Endothelial cell of umbilical vein (primary cell): ENCODE measurements at regions of chr20 and their contacts with region 1.

Region 1: GRCh38 chr20:1392823-1393506 is at the start of gene FKBP1A:
- DNase-seq: peak; percentile 90
- H3K4me3 ChIP-seq: peak within 1 kb of the TSS; percentile 82 to 86 (median 83)
- H3K27ac ChIP-seq: peak within 1 kb of the TSS; percentile 90
- H3K4me1 ChIP-seq: peaks cover 70% of the 10 kb centered on the region
- H3K27me3 ChIP-seq: no peaks in the 10 kb centered on the region
- CTCF ChIP-seq: peak in 1 of 2 donors; percentile 8
- POLR2A ChIP-seq: peak; percentile 92
- total RNA-seq, gene FKBP1A: 968 and 982 TPM in 2 replicates

Region 2: DNA sequence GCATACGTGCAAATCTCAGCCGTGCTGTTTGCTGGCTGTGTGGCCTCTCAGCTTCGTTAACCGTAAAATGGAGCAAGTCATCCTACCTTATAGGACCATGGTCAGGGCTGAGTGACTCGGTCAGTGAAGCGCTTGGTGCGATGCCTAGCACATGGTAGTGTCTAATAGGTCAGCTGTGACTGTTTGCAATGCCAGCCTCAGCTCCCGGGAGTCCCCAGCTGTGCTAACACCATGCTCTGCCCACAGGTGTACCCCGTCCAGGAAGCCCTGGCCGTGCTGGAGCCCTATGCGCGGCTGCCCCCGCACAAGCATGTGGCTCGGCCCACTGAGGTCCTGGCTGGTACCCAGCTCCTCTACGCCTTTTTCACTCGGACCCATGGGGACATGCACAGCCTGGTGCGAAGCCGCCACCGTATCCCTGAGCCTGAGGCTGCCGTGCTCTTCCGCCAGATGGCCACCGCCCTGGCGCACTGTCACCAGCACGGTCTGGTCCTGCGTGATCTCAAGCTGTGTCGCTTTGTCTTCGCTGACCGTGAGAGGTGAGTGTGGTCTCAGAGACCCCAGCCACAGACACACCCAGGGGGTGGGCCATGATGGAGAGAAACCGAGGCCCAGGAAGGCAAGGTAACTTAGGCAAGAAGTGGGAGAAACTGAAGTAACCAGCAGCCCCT is 1001.8 kb before region 1 on chr20:
- CTCF ChIA-PET with region 1: no interaction called
- POLR2A ChIA-PET with region 1: no interaction called
- dilution Hi-C with region 1: no loop called
- intact Hi-C with region 1: no loop called
- DNase-seq: no peak
- H3K4me3 ChIP-seq: no peak overlapping the region
- H3K27ac ChIP-seq: no peak overlapping the region
- H3K4me1 ChIP-seq: no peaks in the 10 kb centered on the region
- H3K27me3 ChIP-seq: no peaks in the 10 kb centered on the region
- CTCF ChIP-seq: no peak
- POLR2A ChIP-seq: no peak

Region 3: DNA sequence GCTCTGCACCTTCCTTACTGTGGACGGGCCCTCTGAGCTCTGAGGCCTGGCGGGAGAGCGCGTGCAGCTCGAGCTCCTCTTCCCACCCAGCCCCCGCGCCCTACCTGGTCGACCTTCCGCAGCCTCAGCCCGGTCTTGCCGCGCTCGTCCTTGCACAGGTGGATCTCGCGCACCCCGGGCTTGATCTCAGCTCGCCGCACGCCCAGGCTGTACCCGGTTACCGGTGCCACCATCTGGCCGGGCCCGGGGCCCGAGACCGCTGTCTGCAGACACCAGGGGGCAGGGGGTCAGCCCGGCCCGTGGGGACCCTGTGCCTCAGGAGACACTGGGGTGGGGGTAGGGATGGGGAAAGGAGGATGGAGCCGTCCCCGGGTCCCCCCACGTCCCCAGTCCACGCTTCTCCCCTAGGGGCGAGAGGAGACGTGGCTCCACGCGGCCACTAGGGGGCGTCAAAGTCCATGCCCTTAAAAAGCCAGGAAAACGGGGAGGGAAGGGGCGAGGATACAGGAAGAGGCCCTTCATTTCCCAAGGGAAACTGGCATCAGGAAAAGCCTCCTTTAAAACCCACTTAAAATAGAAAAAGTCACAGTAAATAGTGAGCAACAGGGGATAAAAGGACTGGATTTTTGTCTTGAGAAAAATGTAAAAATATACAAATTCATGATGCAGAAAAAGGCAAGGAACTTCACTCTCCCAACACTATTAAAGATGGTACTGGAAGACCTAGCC is 79.6 kb before region 1 on chr20:
- CTCF ChIA-PET with region 1: interaction called, 18 read pairs
- POLR2A ChIA-PET with region 1: no interaction called
- dilution Hi-C with region 1: no loop called
- intact Hi-C with region 1: loop called (anchors 1 kb)
- DNase-seq: peak; percentile 78
- H3K4me3 ChIP-seq: peak overlapping the region in 1 of 3 experiments; percentile 8
- H3K27ac ChIP-seq: peak overlapping the region; percentile 61
- H3K4me1 ChIP-seq: peaks cover 9% of the 10 kb centered on the region
- H3K27me3 ChIP-seq: no peaks in the 10 kb centered on the region
- CTCF ChIP-seq: peak; percentile 89 to 95
- POLR2A ChIP-seq: no peak

Region 4: GRCh38 chr20:1336699-1337367 is 56.1 kb before region 1 on chr20:
- CTCF ChIA-PET with region 1: interaction called, 4 read pairs
- POLR2A ChIA-PET with region 1: interaction called, 4 read pairs
- dilution Hi-C with region 1: no loop called
- intact Hi-C with region 1: loop called (anchors 1 kb)
- DNase-seq: peak; percentile 97
- H3K4me3 ChIP-seq: no peak overlapping the region
- H3K27ac ChIP-seq: peak overlapping the region; percentile 93
- H3K4me1 ChIP-seq: peaks cover 53% of the 10 kb centered on the region
- H3K27me3 ChIP-seq: no peaks in the 10 kb centered on the region
- CTCF ChIP-seq: no peak
- POLR2A ChIP-seq: peak; percentile 59

Region 5: GRCh38 chr20:1381753-1382591 is 11.0 kb before region 1 on chr20:
- CTCF ChIA-PET with region 1: interaction called, 15 read pairs
- POLR2A ChIA-PET with region 1: interaction called, 9 read pairs
- dilution Hi-C with region 1: no loop called
- intact Hi-C with region 1: loop called (anchors 1 kb)
- DNase-seq: no peak
- H3K4me3 ChIP-seq: no peak overlapping the region
- H3K27ac ChIP-seq: peak overlapping the region; percentile 9
- H3K4me1 ChIP-seq: peaks cover 95% of the 10 kb centered on the region
- H3K27me3 ChIP-seq: no peaks in the 10 kb centered on the region
- CTCF ChIP-seq: no peak
- POLR2A ChIP-seq: peak; percentile 48

Region 6: DNA sequence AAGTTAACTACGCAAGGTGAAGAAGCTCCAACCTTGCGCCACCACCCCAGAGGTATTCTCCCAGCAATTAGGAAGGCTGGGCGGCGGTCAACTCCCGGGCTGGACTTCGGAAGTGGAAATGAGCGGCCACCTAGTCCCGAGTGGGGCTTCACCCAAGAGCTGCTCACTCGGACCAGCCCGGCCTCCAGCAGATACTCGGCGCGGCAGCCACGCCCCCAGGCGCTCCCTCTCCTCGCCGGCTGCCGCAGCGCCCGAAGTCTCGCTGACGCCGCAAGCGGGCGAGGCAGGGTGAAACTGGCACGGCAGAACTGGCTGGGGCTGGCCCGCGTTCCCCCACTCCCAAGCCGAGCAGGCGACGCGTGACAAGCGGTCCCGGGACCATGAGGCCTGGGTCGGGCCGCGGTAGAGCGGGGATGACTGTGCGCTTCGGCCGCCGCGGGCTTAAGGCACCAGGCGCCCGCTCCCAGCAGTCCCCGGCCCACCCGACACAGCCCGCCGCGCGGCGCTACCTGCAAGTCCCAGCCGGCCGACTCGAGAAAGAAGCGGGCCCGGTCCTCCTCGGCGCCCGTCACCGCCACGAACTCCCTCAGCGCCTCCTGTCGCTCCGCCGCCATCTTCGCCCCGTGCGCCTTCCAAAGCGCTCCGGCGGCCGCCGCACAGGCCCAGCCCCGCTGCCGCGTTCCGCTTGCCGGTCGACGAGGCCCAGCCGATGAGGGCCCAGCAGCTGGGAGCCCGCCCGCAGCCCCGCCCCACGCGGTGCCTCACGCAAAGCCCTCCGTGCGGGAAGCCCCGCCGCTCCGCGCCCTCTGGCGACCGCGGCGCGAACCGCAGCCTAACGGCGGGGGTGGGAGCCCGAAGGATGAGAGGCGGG is 73.5 kb after region 1 on chr20 and contains the start of gene NSFL1C:
- CTCF ChIA-PET with region 1: interaction called, 4 read pairs
- POLR2A ChIA-PET with region 1: no interaction called
- dilution Hi-C with region 1: no loop called
- intact Hi-C with region 1: loop called (anchors 2 kb)
- DNase-seq: peak; percentile 94
- H3K4me3 ChIP-seq: peak within 1 kb of the TSS; percentile 51 to 95 (median 75)
- H3K27ac ChIP-seq: peak within 1 kb of the TSS; percentile 78
- H3K4me1 ChIP-seq: peaks cover 35% of the 10 kb centered on the region
- H3K27me3 ChIP-seq: no peaks in the 10 kb centered on the region
- CTCF ChIP-seq: peak; percentile 69 to 91
- POLR2A ChIP-seq: peak; percentile 76
- total RNA-seq, gene NSFL1C: 95.7 and 107 TPM in 2 replicates